IMR-90 (cell line): ENCODE measurements at regions of chr2 and their contacts with region 1.

Region 1: DNA sequence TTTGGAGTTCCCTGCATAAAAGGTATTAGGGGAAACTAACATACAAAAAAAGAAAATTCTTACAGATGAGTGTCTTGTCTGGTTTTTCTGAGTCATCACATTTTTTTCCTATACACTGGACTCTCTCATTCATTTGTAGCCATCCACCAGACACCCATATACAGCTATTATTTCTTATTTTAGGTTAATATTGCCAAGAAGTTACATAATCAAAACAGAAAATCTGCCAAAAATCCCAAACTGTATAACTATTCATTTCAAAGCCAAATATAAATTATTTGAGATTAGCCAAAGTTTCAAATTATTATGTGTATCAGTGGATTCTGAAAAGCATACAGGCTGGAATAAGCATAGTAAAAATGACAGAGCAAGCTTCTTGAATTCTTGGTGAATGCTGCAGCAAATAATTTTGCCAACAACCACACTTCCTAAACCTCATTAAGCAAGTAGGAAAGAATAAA is 191.2 kb downstream of the NCKAP5 start:
- DNase-seq: peak; percentile 78
- ATAC-seq: peak; percentile 87
- H3K4me3 ChIP-seq: no peak overlapping the region
- H3K27ac ChIP-seq: no peak overlapping the region
- H3K4me1 ChIP-seq: peaks cover 13% of the 10 kb centered on the region
- H3K27me3 ChIP-seq: no peaks in the 10 kb centered on the region
- CTCF ChIP-seq: no peak
- POLR2A ChIP-seq: no peak
- RAD21 ChIP-seq: no peak

Region 2: DNA sequence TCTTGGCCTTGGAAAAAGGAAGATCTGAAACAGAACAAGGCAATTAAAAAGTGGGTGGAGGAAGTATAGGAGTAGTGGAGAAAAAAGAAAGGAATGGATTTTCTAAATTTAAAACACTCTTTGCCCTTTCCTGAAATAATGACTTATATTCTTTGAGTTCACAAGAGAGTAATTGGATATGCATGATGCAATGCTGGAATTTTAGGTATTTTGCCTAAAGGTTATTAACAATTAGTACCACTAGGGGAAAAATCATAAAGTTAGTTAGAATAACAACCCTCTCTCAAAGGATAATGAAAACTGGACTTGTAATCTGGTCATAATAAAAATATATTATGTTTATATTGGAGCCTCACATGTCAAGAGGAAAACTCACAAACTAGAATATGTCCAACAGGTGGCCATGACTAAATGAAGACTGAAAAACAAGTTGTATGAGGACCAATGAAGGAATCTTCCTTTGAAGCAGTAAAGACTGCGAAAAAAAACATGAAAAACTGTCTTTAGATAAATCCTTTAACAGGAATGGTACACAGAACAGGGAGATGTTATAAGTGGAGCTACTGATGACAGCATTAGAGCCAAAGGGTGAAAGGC is 90.6 kb before region 1 on chr2:
- CTCF ChIA-PET with region 1: interaction called, 13 read pairs
- POLR2A ChIA-PET with region 1: no interaction called
- dilution Hi-C with region 1: no loop called
- in situ Hi-C with region 1: no loop called
- intact Hi-C with region 1: no loop called
- DNase-seq: peak; percentile 81
- ATAC-seq: peak; percentile 25
- H3K4me3 ChIP-seq: no peak overlapping the region
- H3K27ac ChIP-seq: peak overlapping the region; percentile 97
- H3K4me1 ChIP-seq: peaks cover 22% of the 10 kb centered on the region
- H3K27me3 ChIP-seq: no peaks in the 10 kb centered on the region
- CTCF ChIP-seq: peak; percentile 25; the same call in 1 of the 2 replicates
- POLR2A ChIP-seq: no peak
- RAD21 ChIP-seq: no peak

Region 3: GRCh38 chr2:133303134-133303533 is 73.9 kb before region 1 on chr2:
- CTCF ChIA-PET with region 1: no interaction called
- POLR2A ChIA-PET with region 1: no interaction called
- dilution Hi-C with region 1: no loop called
- in situ Hi-C with region 1: no loop called
- intact Hi-C with region 1: loop called (anchors 1 kb)
- DNase-seq: peak; percentile 90
- ATAC-seq: peak; percentile 92
- H3K4me3 ChIP-seq: no peak overlapping the region
- H3K27ac ChIP-seq: peak overlapping the region; percentile 94
- H3K4me1 ChIP-seq: peaks cover 4% of the 10 kb centered on the region; the same call in 1 of the 2 replicates
- H3K27me3 ChIP-seq: no peaks in the 10 kb centered on the region
- CTCF ChIP-seq: no peak
- POLR2A ChIP-seq: no peak
- RAD21 ChIP-seq: no peak

Region 4: DNA sequence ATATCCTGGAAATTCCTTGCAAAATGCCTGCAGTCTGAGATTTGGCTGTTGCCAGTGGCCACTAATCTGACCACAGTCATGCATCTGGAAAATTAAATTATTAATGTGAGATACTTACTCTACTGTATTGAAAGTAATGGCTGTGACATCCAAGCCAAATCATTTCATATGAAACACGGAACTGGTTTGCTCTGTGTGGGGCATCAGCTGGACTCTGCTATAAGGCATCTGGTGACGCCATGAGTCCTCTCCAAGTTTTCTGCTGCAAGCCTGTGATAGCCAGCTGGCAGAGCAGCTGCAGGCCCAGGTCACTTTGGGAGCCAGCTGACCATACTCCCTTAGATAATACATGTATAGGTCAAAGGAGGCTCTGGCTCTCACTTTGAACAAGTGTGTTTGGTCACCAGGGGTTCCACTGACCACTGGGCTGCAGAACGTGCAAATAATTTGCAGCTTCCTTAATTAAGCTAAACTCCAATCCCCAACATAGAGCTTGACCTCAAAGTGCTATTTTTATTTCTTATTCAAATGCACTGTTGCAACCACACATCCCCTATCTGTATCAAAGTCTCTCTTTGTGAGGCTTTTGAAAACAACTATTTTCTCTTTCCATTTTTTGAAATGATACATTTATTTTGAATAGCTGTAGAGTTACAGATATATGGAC is 38.3 kb after region 1 on chr2:
- CTCF ChIA-PET with region 1: no interaction called
- POLR2A ChIA-PET with region 1: no interaction called
- dilution Hi-C with region 1: no loop called
- in situ Hi-C with region 1: no loop called
- intact Hi-C with region 1: no loop called
- DNase-seq: no peak
- ATAC-seq: no peak
- H3K4me3 ChIP-seq: no peak overlapping the region
- H3K27ac ChIP-seq: no peak overlapping the region
- H3K4me1 ChIP-seq: peaks cover 10% of the 10 kb centered on the region
- H3K27me3 ChIP-seq: no peaks in the 10 kb centered on the region
- CTCF ChIP-seq: no peak
- POLR2A ChIP-seq: no peak
- RAD21 ChIP-seq: no peak